Caco-2 (cell line): ENCODE measurements at regions of chr19 and their contacts with region 1.

Region 1: GRCh38 chr19:8412783-8413628 is at the start of gene MARCHF2:
- DNase-seq: peak; percentile 95 to 96
- H3K4me3 ChIP-seq: peak within 1 kb of the TSS; percentile 75
- H3K4me3 Mint-ChIP-seq: peak within 1 kb of the TSS; percentile 53
- H3K27ac Mint-ChIP-seq: no peak within 1 kb of the TSS
- H3K4me1 ChIP-seq: peaks cover 11% of the 10 kb centered on the region
- H3K4me1 Mint-ChIP-seq: no peaks in the 10 kb centered on the region
- H3K27me3 ChIP-seq: no peaks in the 10 kb centered on the region
- H3K27me3 Mint-ChIP-seq: no peaks in the 10 kb centered on the region
- CTCF ChIP-seq: peak; percentile 37 to 72
- total RNA-seq, gene MARCHF2: 13.8 and 15.2 TPM in 2 replicates

Region 2: DNA sequence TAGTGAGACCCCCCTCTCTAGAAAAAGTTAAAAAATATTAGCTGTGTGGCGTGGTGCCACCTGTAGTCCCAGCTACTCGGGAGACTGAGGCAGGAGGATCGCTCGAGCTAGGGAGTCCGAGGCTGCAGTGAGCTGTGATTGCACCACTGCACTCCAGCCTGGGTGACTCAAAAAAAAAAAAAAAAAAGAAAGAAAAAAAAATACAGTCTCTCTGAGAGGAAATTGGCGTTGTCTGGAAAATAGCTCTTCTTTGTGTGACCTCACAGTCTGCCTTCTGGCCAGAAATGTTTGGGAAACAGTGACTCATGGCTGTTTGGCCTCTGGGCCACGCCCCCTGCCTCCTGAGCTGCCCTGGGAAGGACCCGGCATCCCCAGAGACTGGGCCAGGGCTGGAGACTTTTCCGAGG is 10.8 kb after region 1 on chr19:
- CTCF ChIA-PET with region 1: interaction called, 18 read pairs
- POLR2A ChIA-PET with region 1: interaction called, 7 read pairs
- intact Hi-C with region 1: no loop called
- DNase-seq: peak; percentile 79 to 86
- H3K4me3 ChIP-seq: no peak overlapping the region
- H3K4me3 Mint-ChIP-seq: no peak overlapping the region
- H3K27ac Mint-ChIP-seq: peak overlapping the region; percentile 45
- H3K4me1 ChIP-seq: peaks cover 11% of the 10 kb centered on the region; the same call in 1 of the 2 replicates
- H3K4me1 Mint-ChIP-seq: no peaks in the 10 kb centered on the region
- H3K27me3 ChIP-seq: no peaks in the 10 kb centered on the region
- H3K27me3 Mint-ChIP-seq: no peaks in the 10 kb centered on the region
- CTCF ChIP-seq: no peak

Region 3: GRCh38 chr19:8459520-8460259 is 46.7 kb after region 1 on chr19:
- CTCF ChIA-PET with region 1: interaction called, 4 read pairs
- POLR2A ChIA-PET with region 1: no interaction called
- intact Hi-C with region 1: loop called (anchors 5 kb)
- DNase-seq: peak in 1 of 2 experiments; percentile 14
- H3K4me3 ChIP-seq: no peak overlapping the region
- H3K4me3 Mint-ChIP-seq: peak overlapping the region; percentile 23
- H3K27ac Mint-ChIP-seq: peak overlapping the region; percentile 45
- H3K4me1 ChIP-seq: peaks cover 54% of the 10 kb centered on the region
- H3K4me1 Mint-ChIP-seq: peaks cover 42% of the 10 kb centered on the region
- H3K27me3 ChIP-seq: no peaks in the 10 kb centered on the region
- H3K27me3 Mint-ChIP-seq: no peaks in the 10 kb centered on the region
- CTCF ChIP-seq: no peak

Region 4: DNA sequence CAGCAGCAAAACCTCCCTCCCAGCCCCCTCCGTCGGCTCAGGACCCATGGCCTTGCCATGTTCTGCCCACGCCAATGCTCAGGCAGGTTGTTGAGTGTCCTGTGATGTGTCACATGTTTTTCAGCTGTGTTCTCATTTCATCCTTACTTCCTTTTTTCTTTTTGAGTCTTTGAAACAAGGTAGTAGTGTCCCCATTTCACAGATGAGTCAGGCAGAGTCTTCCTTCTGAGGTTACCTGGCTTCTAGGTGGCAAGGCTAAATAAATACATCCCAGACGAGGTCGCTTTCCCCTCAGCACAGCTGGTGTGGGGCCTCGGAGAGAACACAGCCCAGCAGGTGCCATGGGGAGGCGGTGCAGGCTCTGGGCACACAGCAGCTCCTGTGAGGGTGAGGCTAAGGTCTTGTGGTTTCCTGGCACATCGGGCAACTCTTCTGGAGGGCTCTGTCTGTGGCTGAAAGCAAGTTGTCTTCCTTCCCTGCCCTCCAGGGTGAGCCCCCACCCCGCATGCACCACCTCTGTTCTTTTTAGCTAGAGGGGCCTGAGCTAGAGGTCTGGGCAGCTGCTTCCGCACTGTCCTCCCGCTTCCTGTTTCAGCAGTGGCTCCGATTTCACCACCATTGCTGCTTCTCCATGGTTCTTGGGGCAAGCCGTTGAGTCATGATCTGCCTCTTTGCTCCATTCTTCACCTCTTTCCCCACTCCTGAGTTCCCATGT is 74.3 kb after region 1 on chr19:
- CTCF ChIA-PET with region 1: no interaction called
- POLR2A ChIA-PET with region 1: no interaction called
- intact Hi-C with region 1: no loop called
- DNase-seq: no peak
- H3K4me3 ChIP-seq: no peak overlapping the region
- H3K4me3 Mint-ChIP-seq: no peak overlapping the region
- H3K27ac Mint-ChIP-seq: no peak overlapping the region
- H3K4me1 ChIP-seq: no peaks in the 10 kb centered on the region
- H3K4me1 Mint-ChIP-seq: no peaks in the 10 kb centered on the region
- H3K27me3 ChIP-seq: no peaks in the 10 kb centered on the region
- H3K27me3 Mint-ChIP-seq: no peaks in the 10 kb centered on the region
- CTCF ChIP-seq: no peak

Region 5: GRCh38 chr19:8513687-8514504 is 100.9 kb after region 1 on chr19 and contains the start of gene ZNF414:
- CTCF ChIA-PET with region 1: interaction called, 16 read pairs
- POLR2A ChIA-PET with region 1: interaction called, 6 read pairs
- intact Hi-C with region 1: loop called (anchors 5 kb)
- DNase-seq: peak; percentile 96 to 98
- H3K4me3 ChIP-seq: peak within 1 kb of the TSS; percentile 86
- H3K4me3 Mint-ChIP-seq: peak within 1 kb of the TSS; percentile 76
- H3K27ac Mint-ChIP-seq: peak within 1 kb of the TSS; percentile 91
- H3K4me1 ChIP-seq: peaks cover 12% of the 10 kb centered on the region; the same call in 1 of the 2 replicates
- H3K4me1 Mint-ChIP-seq: no peaks in the 10 kb centered on the region
- H3K27me3 ChIP-seq: no peaks in the 10 kb centered on the region
- H3K27me3 Mint-ChIP-seq: no peaks in the 10 kb centered on the region
- CTCF ChIP-seq: no peak
- total RNA-seq, gene ZNF414: 17.2 and 25.0 TPM in 2 replicates

Region 6: DNA sequence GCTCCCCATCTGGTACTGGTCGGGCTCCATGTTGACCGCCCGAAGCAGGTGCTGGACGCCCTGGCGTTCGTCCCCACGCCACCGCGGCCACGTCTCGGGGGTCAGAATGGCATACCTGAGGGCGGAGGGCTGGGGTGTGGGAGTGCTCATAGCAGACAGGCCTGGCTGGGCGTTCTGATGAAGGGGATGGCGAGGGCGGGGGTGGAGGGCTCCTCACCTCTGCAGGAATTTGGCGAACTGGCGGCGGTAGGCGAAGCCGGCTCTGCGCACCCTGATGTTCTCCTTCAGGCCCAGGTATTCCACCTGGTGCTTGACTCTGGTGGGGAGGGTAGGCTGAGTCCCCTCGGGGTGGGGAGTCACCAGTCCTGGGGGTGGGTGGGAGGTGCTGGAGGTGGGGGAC is 123.3 kb after region 1 on chr19:
- CTCF ChIA-PET with region 1: no interaction called
- POLR2A ChIA-PET with region 1: no interaction called
- intact Hi-C with region 1: no loop called
- DNase-seq: no peak
- H3K4me3 ChIP-seq: no peak overlapping the region
- H3K4me3 Mint-ChIP-seq: no peak overlapping the region
- H3K27ac Mint-ChIP-seq: no peak overlapping the region
- H3K4me1 ChIP-seq: peaks cover 6% of the 10 kb centered on the region; the same call in 1 of the 2 replicates
- H3K4me1 Mint-ChIP-seq: peaks cover 11% of the 10 kb centered on the region
- H3K27me3 ChIP-seq: no peaks in the 10 kb centered on the region
- H3K27me3 Mint-ChIP-seq: no peaks in the 10 kb centered on the region
- CTCF ChIP-seq: no peak